A673 (cell line): ENCODE measurements at regions of chr5 and their contacts with region 1.

Region 1: GRCh38 chr5:80711938-80712337 is 57.2 kb upstream of the DHFR start:
- DNase-seq: peak; percentile 72
- H3K4me3 ChIP-seq: no peak overlapping the region
- H3K27ac ChIP-seq: no peak overlapping the region
- H3K4me1 ChIP-seq: peaks cover 4% of the 10 kb centered on the region
- H3K27me3 ChIP-seq: no peaks in the 10 kb centered on the region
- CTCF ChIP-seq: peak; percentile 72

Region 2: DNA sequence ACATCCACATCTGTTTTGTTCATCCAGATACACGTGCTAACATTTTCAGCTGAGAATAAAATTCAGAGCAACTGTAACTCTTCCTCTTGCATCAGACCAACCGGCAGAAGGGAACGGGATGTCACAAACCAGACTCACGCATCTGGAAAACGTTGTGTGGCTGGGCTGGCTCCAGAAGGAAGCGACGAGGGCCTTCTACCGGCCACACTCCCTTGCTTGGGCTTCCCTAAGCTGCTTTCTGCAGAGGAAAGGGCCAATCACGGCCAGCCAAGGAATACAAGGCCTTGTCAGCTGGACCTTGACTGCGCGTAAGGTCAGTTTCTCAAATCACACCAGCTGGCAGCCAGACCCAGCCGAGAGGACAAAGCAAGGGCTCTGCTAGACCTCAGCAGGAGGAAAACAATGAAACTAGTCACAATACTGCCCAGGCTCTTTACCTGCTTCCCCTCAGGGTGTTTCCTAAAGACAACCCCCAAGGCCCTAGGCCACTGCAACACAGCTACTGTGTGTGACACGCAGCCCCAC is 570.7 kb before region 1 on chr5:
- CTCF ChIA-PET with region 1: no interaction called
- POLR2A ChIA-PET with region 1: no interaction called
- intact Hi-C with region 1: no loop called
- DNase-seq: no peak
- H3K4me3 ChIP-seq: no peak overlapping the region
- H3K27ac ChIP-seq: peak overlapping the region; percentile 47
- H3K4me1 ChIP-seq: peaks cover 17% of the 10 kb centered on the region
- H3K27me3 ChIP-seq: no peaks in the 10 kb centered on the region
- CTCF ChIP-seq: no peak

Region 3: DNA sequence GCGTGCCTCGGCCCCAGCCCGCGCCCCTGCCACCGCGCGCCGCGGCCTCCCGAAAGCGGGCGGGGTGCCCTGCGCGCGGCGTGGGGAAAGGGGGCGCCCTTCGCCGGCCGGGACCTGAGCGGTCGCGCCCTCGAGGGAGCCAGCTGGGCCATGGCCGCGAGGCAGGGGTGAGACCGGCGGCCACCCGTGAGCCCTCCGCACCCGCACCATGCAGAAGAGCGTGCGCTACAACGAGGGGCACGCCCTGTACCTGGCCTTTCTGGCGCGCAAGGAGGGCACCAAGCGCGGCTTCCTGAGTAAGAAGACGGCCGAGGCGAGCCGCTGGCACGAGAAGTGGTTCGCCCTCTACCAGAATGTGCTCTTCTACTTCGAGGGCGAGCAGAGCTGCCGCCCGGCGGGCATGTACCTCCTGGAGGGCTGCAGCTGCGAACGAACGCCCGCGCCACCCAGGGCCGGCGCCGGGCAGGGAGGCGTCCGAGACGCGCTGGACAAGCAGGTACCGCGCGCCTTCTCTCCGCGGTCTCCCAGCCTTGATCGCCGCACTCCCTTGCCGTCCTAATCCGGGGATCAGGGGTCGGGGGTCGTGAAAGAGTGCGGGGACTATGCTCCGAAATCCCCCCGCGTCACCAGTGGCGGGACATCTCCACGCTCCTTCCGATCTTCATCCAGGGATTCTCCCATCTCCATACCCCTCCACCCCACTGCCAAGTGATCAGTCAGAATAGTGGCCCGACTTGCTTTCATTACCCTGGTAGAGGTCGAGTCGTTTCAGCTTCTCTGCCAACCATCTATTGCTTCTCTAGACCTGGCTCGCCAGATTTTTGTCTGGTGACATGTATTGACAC is 248.8 kb after region 1 on chr5:
- CTCF ChIA-PET with region 1: no interaction called
- POLR2A ChIA-PET with region 1: no interaction called
- intact Hi-C with region 1: loop called (anchors 10 kb)
- DNase-seq: peak; percentile 56
- H3K4me3 ChIP-seq: peak overlapping the region; percentile 50
- H3K27ac ChIP-seq: no peak overlapping the region
- H3K4me1 ChIP-seq: peaks cover 54% of the 10 kb centered on the region
- H3K27me3 ChIP-seq: peaks cover 6% of the 10 kb centered on the region
- CTCF ChIP-seq: no peak

Region 4: GRCh38 chr5:81165493-81166119 is 453.7 kb after region 1 on chr5:
- CTCF ChIA-PET with region 1: interaction called, 4 read pairs
- POLR2A ChIA-PET with region 1: no interaction called
- intact Hi-C with region 1: loop called (anchors 5 kb)
- DNase-seq: peak; percentile 77
- H3K4me3 ChIP-seq: no peak overlapping the region
- H3K27ac ChIP-seq: no peak overlapping the region
- H3K4me1 ChIP-seq: no peaks in the 10 kb centered on the region
- H3K27me3 ChIP-seq: no peaks in the 10 kb centered on the region
- CTCF ChIP-seq: peak; percentile 90

Region 5: DNA sequence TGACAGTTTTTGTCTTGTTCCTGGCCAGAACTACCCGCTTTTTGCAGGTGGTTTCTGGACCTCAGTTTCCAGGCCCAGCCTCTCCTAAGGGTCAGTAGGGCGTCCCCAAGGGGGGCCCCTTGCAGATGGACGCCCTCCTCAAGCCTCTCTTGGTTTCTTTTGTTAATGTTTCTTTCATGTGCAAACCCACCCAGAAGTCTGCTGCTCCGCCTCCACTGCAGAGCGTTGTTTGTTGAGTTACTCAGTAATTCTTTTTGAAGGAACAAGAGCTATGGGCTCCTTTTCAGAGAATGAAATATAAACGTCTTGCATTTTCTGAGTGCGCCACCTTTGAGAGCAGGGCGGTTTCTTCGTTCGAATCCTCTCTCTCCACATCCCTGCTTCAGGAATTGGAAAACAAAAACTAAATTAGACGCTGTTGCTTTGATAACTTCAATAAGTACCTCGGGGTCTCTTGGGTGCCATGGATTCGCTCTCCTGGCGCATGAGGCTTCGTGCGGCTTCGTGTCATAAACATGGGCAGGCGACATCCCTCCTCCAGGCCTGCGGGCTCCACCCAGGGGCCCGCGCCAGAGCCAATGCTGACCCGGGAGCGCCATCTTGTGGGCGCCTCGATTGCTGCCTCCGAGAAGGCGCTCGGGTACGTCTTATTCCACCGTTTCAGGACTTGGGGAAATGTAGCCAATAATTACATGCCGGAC is 482.8 kb after region 1 on chr5:
- CTCF ChIA-PET with region 1: no interaction called
- POLR2A ChIA-PET with region 1: no interaction called
- intact Hi-C with region 1: loop called (anchors 2 kb)
- DNase-seq: peak; percentile 89
- H3K4me3 ChIP-seq: no peak overlapping the region
- H3K27ac ChIP-seq: no peak overlapping the region
- H3K4me1 ChIP-seq: peaks cover 5% of the 10 kb centered on the region
- H3K27me3 ChIP-seq: no peaks in the 10 kb centered on the region
- CTCF ChIP-seq: peak; percentile 98